HepG2 (cell line): ENCODE measurements at regions of chr10 and their contacts with region 1.

Region 1: GRCh38 chr10:79380125-79380945 is 33.1 kb downstream of the PPIF start:
- DNase-seq: peak; percentile 92
- ATAC-seq: peak; percentile 82
- H3K4me3 ChIP-seq: peak overlapping the region; percentile 63 to 90 (median 71)
- H3K27ac ChIP-seq: peak overlapping the region; percentile 95
- H3K4me1 ChIP-seq: peaks cover 65% of the 10 kb centered on the region
- H3K27me3 ChIP-seq: no peaks in the 10 kb centered on the region
- CTCF ChIP-seq: peak; percentile 8; the same call in 1 of the 2 replicates
- EP300 ChIP-seq: peak in 1 of 2 experiments; percentile 82; a peak in 2 of 4 replicates
- POLR2A ChIP-seq: peak; percentile 71 to 81
- RAD21 ChIP-seq: no peak

Region 2: GRCh38 chr10:79266543-79267312 is 113.6 kb before region 1 on chr10:
- CTCF ChIA-PET with region 1: no interaction called
- POLR2A ChIA-PET with region 1: no interaction called
- in situ Hi-C with region 1: no loop called
- intact Hi-C with region 1: no loop called
- DNase-seq: no peak
- ATAC-seq: no peak
- H3K4me3 ChIP-seq: no peak overlapping the region
- H3K27ac ChIP-seq: no peak overlapping the region
- H3K4me1 ChIP-seq: peaks cover 2% of the 10 kb centered on the region
- H3K27me3 ChIP-seq: no peaks in the 10 kb centered on the region
- CTCF ChIP-seq: no peak
- EP300 ChIP-seq: no peak
- POLR2A ChIP-seq: no peak
- RAD21 ChIP-seq: no peak

Region 3: GRCh38 chr10:79331709-79332108 is 48.6 kb before region 1 on chr10:
- CTCF ChIA-PET with region 1: no interaction called
- POLR2A ChIA-PET with region 1: interaction called, 12 read pairs
- in situ Hi-C with region 1: no loop called
- intact Hi-C with region 1: no loop called
- DNase-seq: no peak
- ATAC-seq: no peak
- H3K4me3 ChIP-seq: no peak overlapping the region
- H3K27ac ChIP-seq: no peak overlapping the region
- H3K4me1 ChIP-seq: peaks cover 53% of the 10 kb centered on the region
- H3K27me3 ChIP-seq: no peaks in the 10 kb centered on the region
- CTCF ChIP-seq: no peak
- EP300 ChIP-seq: no peak
- POLR2A ChIP-seq: no peak
- RAD21 ChIP-seq: no peak

Region 4: DNA sequence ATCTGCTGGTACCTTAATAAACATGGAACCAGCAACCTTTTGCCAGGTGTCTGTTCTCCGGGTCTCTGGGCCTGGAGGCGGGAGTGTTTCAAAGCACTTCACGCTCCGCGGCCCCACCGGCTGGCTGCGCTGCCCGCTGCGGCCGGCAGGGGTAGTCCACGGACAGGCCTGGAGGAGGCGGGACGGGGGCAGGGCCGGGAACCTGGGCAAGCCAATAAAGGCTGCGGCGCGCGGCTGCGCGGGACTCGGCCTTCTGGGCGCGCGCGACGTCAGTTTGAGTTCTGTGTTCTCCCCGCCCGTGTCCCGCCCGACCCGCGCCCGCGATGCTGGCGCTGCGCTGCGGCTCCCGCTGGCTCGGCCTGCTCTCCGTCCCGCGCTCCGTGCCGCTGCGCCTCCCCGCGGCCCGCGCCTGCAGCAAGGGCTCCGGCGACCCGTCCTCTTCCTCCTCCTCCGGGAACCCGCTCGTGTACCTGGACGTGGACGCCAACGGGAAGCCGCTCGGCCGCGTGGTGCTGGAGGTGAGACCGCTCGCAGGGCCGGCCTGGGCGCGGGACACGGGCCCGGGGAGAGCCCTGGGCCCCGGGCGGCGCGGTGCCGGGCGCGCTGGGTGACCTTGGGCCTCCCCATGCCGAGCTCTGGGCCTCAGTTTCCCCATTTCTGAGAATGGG is 33.0 kb before region 1 on chr10 and contains the start of gene PPIF:
- CTCF ChIA-PET with region 1: no interaction called
- POLR2A ChIA-PET with region 1: interaction called, 18 read pairs
- in situ Hi-C with region 1: no loop called
- intact Hi-C with region 1: no loop called
- DNase-seq: peak; percentile 79
- ATAC-seq: peak; percentile 86
- H3K4me3 ChIP-seq: peak within 1 kb of the TSS; percentile 75 to 85 (median 78)
- H3K27ac ChIP-seq: peak within 1 kb of the TSS; percentile 93
- H3K4me1 ChIP-seq: peaks cover 62% of the 10 kb centered on the region
- H3K27me3 ChIP-seq: no peaks in the 10 kb centered on the region
- CTCF ChIP-seq: peak; percentile 88
- EP300 ChIP-seq: no peak
- POLR2A ChIP-seq: peak; percentile 97 to 98
- RAD21 ChIP-seq: peak; percentile 84
- total RNA-seq, gene PPIF: 157 and 178 TPM in 2 replicates

Region 5: GRCh38 chr10:79358783-79359182 is 21.6 kb before region 1 on chr10:
- CTCF ChIA-PET with region 1: no interaction called
- POLR2A ChIA-PET with region 1: interaction called, 11 read pairs
- in situ Hi-C with region 1: no loop called
- intact Hi-C with region 1: no loop called
- DNase-seq: peak; percentile 94
- ATAC-seq: peak; percentile 91
- H3K4me3 ChIP-seq: no peak overlapping the region
- H3K27ac ChIP-seq: peak overlapping the region; percentile 44
- H3K4me1 ChIP-seq: peaks cover 41% of the 10 kb centered on the region
- H3K27me3 ChIP-seq: no peaks in the 10 kb centered on the region
- CTCF ChIP-seq: peak; percentile 38
- EP300 ChIP-seq: peak in 1 of 2 experiments; percentile 40; a peak in 1 of 4 replicates
- POLR2A ChIP-seq: no peak
- RAD21 ChIP-seq: no peak

Region 6: DNA sequence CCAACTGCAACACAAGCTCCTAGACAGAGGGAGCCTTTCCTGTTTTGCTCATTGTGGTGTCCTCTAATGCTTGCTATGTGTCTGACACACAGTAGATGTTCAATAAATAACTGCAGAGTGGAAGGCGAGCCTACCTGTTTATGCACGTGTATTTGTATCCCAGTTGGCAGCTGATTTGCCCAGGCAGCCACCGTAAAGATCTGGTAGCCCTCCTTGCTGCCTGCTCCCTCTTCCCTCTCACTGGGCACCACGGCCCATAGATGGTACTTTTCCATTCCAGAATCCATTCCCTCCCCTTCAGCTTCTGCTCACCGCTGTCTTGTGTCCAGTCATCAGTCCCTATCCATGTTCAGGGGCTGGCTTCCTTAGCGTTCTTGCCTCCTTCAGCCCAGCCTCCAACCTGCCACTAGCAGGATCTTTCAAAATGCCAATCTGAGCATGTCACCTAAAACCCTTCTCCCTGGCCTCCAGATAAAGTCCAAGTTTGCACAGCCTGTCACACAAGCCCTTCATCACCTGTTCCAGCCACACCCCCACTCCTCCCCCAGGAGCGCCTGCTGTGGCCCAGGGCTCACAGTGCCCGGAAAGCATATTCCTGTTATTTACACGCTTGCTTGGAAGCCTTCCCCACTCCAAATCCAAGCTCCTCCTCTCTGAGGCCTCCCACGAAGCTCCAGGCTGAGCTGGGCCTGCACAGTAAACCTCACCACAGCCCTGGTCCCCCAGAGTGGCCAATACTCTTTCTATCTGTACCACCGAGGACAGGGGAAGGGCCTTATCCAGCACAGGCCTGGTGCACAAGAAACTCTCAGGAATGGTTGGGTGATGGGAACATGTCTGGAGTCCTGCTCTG is 44.1 kb after region 1 on chr10:
- CTCF ChIA-PET with region 1: no interaction called
- POLR2A ChIA-PET with region 1: interaction called, 8 read pairs
- in situ Hi-C with region 1: no loop called
- intact Hi-C with region 1: loop called (anchors 1 kb)
- DNase-seq: peak; percentile 91
- ATAC-seq: peak; percentile 98
- H3K4me3 ChIP-seq: peak overlapping the region in 2 of 3 experiments; percentile 14 to 46; a peak in 3 of 6 replicates
- H3K27ac ChIP-seq: peak overlapping the region; percentile 65
- H3K4me1 ChIP-seq: peaks cover 35% of the 10 kb centered on the region
- H3K27me3 ChIP-seq: no peaks in the 10 kb centered on the region
- CTCF ChIP-seq: 0 out of 2 replicates have a peak, but pooled peaks have one; percentile 14
- EP300 ChIP-seq: peak in 1 of 2 experiments; percentile 56; a peak in 1 of 4 replicates
- POLR2A ChIP-seq: no peak
- RAD21 ChIP-seq: no peak

Region 7: GRCh38 chr10:79445141-79445976 is 65.0 kb after region 1 on chr10 and contains the start of gene ZCCHC24:
- CTCF ChIA-PET with region 1: no interaction called
- POLR2A ChIA-PET with region 1: interaction called, 10 read pairs
- in situ Hi-C with region 1: no loop called
- intact Hi-C with region 1: no loop called
- DNase-seq: peak; percentile 96
- ATAC-seq: peak; percentile 95
- H3K4me3 ChIP-seq: peak within 1 kb of the TSS; percentile 69 to 77 (median 76)
- H3K27ac ChIP-seq: no peak within 1 kb of the TSS
- H3K4me1 ChIP-seq: peaks cover 54% of the 10 kb centered on the region
- H3K27me3 ChIP-seq: peaks cover 2 to 21% of the 10 kb centered on the region in 2 experiments; a peak in 4 of 5 replicates
- CTCF ChIP-seq: no peak
- EP300 ChIP-seq: no peak
- POLR2A ChIP-seq: peak; percentile 26 to 65; a peak in 2 of 4 replicates
- RAD21 ChIP-seq: no peak
- total RNA-seq, gene ZCCHC24: 3.1 and 3.9 TPM in 2 replicates

Region 8: GRCh38 chr10:79459243-79459642 is 78.9 kb after region 1 on chr10:
- CTCF ChIA-PET with region 1: no interaction called
- POLR2A ChIA-PET with region 1: no interaction called
- in situ Hi-C with region 1: no loop called
- intact Hi-C with region 1: no loop called
- DNase-seq: no peak
- ATAC-seq: peak; percentile 44; the same call in 1 of the 3 replicates
- H3K4me3 ChIP-seq: no peak overlapping the region
- H3K27ac ChIP-seq: no peak overlapping the region
- H3K4me1 ChIP-seq: peaks cover 13% of the 10 kb centered on the region; the same call in 1 of the 2 replicates
- H3K27me3 ChIP-seq: peaks cover 0 to 12% of the 10 kb centered on the region in 2 experiments; a peak in 2 of 5 replicates
- CTCF ChIP-seq: no peak
- EP300 ChIP-seq: no peak
- POLR2A ChIP-seq: no peak
- RAD21 ChIP-seq: no peak